ENCODE measurements at regions of chr1 and their contacts with region 1.

Region 1: DNA sequence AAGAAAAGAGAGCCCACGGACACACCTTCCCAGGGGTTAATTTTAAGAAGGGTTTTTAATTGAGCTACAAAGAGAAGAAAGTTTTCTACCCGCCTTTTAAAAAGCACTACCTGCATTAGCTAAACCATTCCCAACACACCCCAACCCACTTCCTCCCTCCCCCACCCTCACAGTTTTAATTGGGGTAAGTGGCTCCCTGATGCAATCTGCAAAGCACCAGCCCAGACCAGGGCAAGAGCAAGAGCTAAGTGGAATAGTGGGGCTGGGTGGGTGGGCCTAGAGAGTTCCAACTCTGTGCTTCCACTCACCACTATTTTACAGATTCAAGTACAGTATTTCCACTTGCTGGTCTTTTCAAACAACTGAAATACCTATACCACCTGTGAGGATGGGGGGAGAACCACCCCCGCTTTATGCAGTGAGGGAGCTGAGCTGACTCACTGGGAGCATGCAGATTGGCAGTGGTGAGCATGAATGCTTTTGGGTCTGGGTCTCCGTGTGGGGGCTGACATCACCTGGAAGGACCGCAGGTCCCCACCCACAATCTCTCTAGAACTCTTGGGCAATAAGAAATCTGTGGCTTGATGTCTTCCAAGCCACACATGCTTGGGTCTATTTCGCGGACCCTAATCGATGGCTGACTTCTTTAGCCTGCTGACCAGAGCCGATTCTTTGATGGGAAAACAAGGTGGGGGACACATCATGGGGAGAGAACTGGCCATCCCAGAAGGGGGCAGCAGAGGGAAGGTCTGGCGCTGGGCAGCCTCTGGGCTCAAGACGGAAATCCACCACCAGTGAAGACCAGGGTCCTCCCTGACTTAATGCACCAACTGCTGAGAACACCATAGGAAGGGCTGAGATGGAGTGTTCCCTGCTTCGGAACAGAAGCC is 95.5 kb downstream of the SSBP3 start:
- DNase-seq: peak in 2 of 9 donors; percentile 20 to 25
- ATAC-seq: peak; percentile 22
- H3K4me3 ChIP-seq: peak overlapping the region; percentile 20
- H3K4me3 Mint-ChIP-seq: peak overlapping the region; percentile 59 to 85 (median 78)
- H3K27ac ChIP-seq: peak overlapping the region; percentile 53
- H3K27ac Mint-ChIP-seq: peak overlapping the region; percentile 6 to 93 (median 89)
- H3K4me1 ChIP-seq: peaks cover 4 to 65% of the 10 kb centered on the region in 2 donors
- H3K4me1 Mint-ChIP-seq: peaks cover 46 to 96% (median 88%) of the 10 kb centered on the region in 7 donors
- H3K27me3 ChIP-seq: no peaks in the 10 kb centered on the region
- H3K27me3 Mint-ChIP-seq: no peaks in the 10 kb centered on the region

Region 2: GRCh38 chr1:54275349-54275748 is 35.3 kb before region 1 on chr1:
- CTCF ChIA-PET with region 1: no interaction called
- POLR2A ChIA-PET with region 1: interaction called, 3 read pairs
- intact Hi-C with region 1: loop called in 1 of 2 experiments (anchors 5 kb)
- DNase-seq: no peak
- ATAC-seq: no peak
- H3K4me3 ChIP-seq: no peak overlapping the region
- H3K4me3 Mint-ChIP-seq: peak overlapping the region in 1 of 10 donors; percentile 33
- H3K27ac ChIP-seq: no peak overlapping the region
- H3K27ac Mint-ChIP-seq: peak overlapping the region in 5 of 9 donors; percentile 62 to 83 (median 75)
- H3K4me1 ChIP-seq: peaks cover 0 to 46% of the 10 kb centered on the region in 2 donors
- H3K4me1 Mint-ChIP-seq: peaks cover 25 to 76% (median 64%) of the 10 kb centered on the region in 7 donors
- H3K27me3 ChIP-seq: no peaks in the 10 kb centered on the region
- H3K27me3 Mint-ChIP-seq: no peaks in the 10 kb centered on the region

Region 3: DNA sequence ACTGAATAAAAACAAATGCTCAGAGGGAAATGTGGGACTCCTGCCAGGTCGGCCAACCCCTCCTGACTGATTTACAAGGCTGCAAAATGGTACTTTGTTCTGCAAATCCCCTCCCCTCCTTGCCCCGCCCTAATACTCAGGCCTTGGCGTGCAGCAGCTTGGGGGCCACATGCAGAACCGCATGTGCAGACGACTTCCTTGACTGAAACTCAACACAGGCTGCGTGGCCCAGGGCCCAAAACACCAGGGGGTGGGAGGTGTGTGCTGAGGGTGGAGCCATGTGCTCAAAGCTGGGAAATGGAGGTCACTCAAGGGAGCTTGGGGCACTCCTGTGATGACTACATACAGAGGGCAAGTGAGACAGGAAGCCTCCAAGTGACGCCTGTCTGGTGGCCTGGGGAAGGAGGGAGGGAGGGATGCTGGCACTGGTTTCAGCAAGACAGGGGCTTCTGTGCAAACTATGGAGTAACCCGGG is 23.5 kb before region 1 on chr1:
- CTCF ChIA-PET with region 1: interaction called, 3 read pairs
- POLR2A ChIA-PET with region 1: interaction called, 7 read pairs
- intact Hi-C with region 1: loop called in 1 of 2 experiments (anchors 1 kb)
- DNase-seq: peak; percentile 21 to 82 (median 73)
- ATAC-seq: peak; percentile 76
- H3K4me3 ChIP-seq: peak overlapping the region; percentile 21
- H3K4me3 Mint-ChIP-seq: peak overlapping the region; percentile 79 to 90 (median 87)
- H3K27ac ChIP-seq: peak overlapping the region; percentile 85
- H3K27ac Mint-ChIP-seq: peak overlapping the region; percentile 87 to 99 (median 96)
- H3K4me1 ChIP-seq: peaks cover 6 to 90% of the 10 kb centered on the region in 2 donors
- H3K4me1 Mint-ChIP-seq: peaks cover 59 to 100% (median 94%) of the 10 kb centered on the region in 7 donors
- H3K27me3 ChIP-seq: no peaks in the 10 kb centered on the region
- H3K27me3 Mint-ChIP-seq: no peaks in the 10 kb centered on the region

Region 4: GRCh38 chr1:54297596-54298283 is 12.9 kb before region 1 on chr1:
- CTCF ChIA-PET with region 1: interaction called, 4 read pairs
- POLR2A ChIA-PET with region 1: interaction called, 6 read pairs
- intact Hi-C with region 1: loop called (anchors 1 to 2 kb)
- DNase-seq: no peak
- ATAC-seq: no peak
- H3K4me3 ChIP-seq: no peak overlapping the region
- H3K4me3 Mint-ChIP-seq: peak overlapping the region in 8 of 10 donors; percentile 37 to 82 (median 64)
- H3K27ac ChIP-seq: peak overlapping the region; percentile 50
- H3K27ac Mint-ChIP-seq: peak overlapping the region in 8 of 9 donors; percentile 68 to 88 (median 82)
- H3K4me1 ChIP-seq: peaks cover 7 to 61% of the 10 kb centered on the region in 2 donors
- H3K4me1 Mint-ChIP-seq: peaks cover 55 to 99% (median 92%) of the 10 kb centered on the region in 7 donors
- H3K27me3 ChIP-seq: no peaks in the 10 kb centered on the region
- H3K27me3 Mint-ChIP-seq: no peaks in the 10 kb centered on the region

Region 5: GRCh38 chr1:54355931-54356679 is 45.4 kb after region 1 on chr1:
- CTCF ChIA-PET with region 1: interaction called, 4 read pairs
- POLR2A ChIA-PET with region 1: interaction called, 3 read pairs
- intact Hi-C with region 1: loop called (anchors 2 to 5 kb)
- DNase-seq: peak in 7 of 9 donors; percentile 7 to 31 (median 24)
- ATAC-seq: peak; percentile 12
- H3K4me3 ChIP-seq: peak overlapping the region; percentile 56
- H3K4me3 Mint-ChIP-seq: peak overlapping the region; percentile 86 to 98 (median 91)
- H3K27ac ChIP-seq: peak overlapping the region; percentile 76
- H3K27ac Mint-ChIP-seq: peak overlapping the region; percentile 87 to 99 (median 97)
- H3K4me1 ChIP-seq: peaks cover 3 to 67% of the 10 kb centered on the region in 2 donors
- H3K4me1 Mint-ChIP-seq: peaks cover 72 to 97% (median 94%) of the 10 kb centered on the region in 7 donors
- H3K27me3 ChIP-seq: no peaks in the 10 kb centered on the region
- H3K27me3 Mint-ChIP-seq: no peaks in the 10 kb centered on the region